ENCODE measurements at regions of chr10 and their contacts with region 1.

Region 1: DNA sequence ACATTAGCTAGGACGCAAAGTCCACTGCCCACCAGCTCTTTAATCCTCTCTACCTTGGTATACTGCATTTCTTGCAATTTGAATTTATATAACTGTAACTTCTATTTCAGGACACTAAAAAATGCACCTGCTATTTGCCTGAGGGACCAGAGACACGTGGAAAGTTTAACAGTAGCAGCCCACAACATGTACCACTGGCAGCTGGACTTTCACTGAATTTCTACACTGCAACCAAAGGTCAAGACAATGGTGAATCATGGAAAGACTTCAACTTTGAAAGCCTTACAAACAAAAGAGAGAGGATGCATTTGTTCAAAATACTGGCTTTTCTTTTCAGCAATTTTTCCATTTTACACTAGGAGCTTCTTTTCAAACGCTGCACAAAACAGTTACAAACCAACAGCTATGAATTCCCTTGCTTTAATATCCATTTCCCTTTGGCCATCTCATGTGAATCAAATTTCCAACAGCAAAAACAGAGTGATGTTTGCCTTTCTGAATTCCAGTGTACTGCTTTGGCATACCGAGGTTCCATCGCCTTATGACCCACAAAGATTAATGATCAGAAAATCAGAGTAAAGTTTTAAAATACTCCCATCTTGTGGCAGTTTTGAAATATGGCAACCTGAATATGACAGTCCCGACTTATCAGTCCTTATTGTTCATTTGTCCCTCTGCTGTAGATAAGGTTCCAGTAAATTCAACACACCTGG is 29.9 kb upstream of the HNRNPH3 start:
- H3K4me3 Mint-ChIP-seq: no peak overlapping the region
- H3K27ac Mint-ChIP-seq: no peak overlapping the region
- H3K4me1 Mint-ChIP-seq: peaks cover 30% of the 10 kb centered on the region
- H3K27me3 Mint-ChIP-seq: no peaks in the 10 kb centered on the region

Region 2: DNA sequence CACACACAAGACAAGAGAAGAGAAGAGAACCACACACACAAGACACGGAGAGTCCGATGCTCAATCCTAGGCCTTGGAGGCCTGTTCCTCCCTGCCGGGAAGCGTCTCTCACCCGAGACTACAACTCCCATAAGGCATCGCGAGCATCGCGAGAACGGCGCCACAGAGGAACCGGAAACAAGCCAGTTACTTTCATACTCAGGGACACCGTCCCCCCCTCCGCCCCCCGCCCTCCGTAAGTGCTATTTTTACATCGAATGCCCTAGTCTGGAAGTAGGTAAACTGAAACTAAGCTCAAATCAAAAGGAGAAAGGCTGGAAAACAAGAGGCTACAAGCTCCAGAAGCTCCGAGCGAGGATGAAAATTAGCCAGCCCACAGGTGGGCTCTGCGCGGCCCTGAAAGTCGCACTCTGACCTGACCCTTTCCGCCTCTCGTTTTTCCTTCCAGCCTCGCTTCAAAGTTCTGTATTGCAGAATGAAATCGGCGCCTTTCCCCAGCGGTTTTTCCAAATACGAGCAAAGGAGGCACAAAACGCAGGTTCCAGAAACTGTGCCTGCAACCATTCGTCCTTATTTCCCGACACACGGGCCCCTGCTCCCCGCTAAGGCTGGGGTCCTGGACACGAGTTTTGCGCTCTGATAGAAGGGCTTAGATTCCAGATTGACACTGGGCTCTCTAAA is 452.5 kb before region 1 on chr10:
- intact Hi-C with region 1: loop called (anchors 10 kb)
- H3K4me3 Mint-ChIP-seq: peak overlapping the region; percentile 80
- H3K27ac Mint-ChIP-seq: peak overlapping the region; percentile 92
- H3K4me1 Mint-ChIP-seq: peaks cover 6% of the 10 kb centered on the region
- H3K27me3 Mint-ChIP-seq: no peaks in the 10 kb centered on the region

Region 3: DNA sequence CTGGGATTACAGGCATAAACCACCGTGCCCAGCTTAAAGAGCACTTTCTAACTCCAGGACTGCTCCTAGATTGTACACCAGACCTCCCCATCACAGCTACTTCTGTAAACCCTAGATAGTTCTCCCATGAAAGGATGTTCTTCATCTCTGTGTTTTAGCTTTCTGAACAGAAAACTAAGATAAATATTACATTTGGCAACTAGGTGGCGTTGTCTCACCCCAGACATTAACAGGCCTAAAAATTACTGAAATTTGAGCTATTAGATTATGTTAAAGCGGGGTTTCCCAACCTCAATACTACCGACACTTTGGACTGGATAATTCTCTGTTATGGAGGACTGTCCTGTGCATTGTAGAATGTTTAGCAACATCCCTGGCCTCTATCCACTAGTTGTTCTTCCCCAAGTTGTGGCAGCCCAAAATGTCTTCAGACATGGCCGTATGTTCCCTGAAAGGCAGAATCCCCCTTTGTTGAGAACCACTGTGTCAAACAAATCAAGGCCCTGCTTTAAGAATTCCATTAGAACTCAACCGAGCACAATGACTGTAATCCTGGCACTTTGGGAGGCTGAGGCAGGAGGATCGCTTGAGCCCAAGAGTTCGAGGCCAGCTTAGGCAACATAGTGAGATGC is 89.1 kb before region 1 on chr10:
- intact Hi-C with region 1: loop called (anchors 1 kb)
- H3K4me3 Mint-ChIP-seq: no peak overlapping the region
- H3K27ac Mint-ChIP-seq: no peak overlapping the region
- H3K4me1 Mint-ChIP-seq: no peaks in the 10 kb centered on the region
- H3K27me3 Mint-ChIP-seq: no peaks in the 10 kb centered on the region

Measured in dendritic cell treated with granulocyte-macrophage colony-stimulating factor and Interleukin-4, amounts not matched to agents 40 ng/mL and 50 ng/mL, for 4 days (primary cell).